Heart left ventricle (tissue), 16 donors: ENCODE measurements at regions of chr2 and their contacts with region 1.

Region 1: GRCh38 chr2:99066075-99066958 is 75.2 kb upstream of the C2orf15 start:
- DNase-seq: no peak
- ATAC-seq: peak in 3 of 4 donors; percentile 50 to 75 (median 66)
- H3K4me3 ChIP-seq: no peak overlapping the region
- H3K27ac ChIP-seq: peak overlapping the region in 1 of 12 donors; percentile 76
- H3K4me1 ChIP-seq: peaks cover 0 to 15% (median 0%) of the 10 kb centered on the region in 12 donors
- H3K27me3 ChIP-seq: no peaks in the 10 kb centered on the region
- CTCF ChIP-seq: peak in 11 of 12 donors; percentile 20 to 53 (median 36)
- POLR2A ChIP-seq: no peak

Region 2: GRCh38 chr2:98649135-98649991 is 417.0 kb before region 1 on chr2:
- intact Hi-C with region 1: loop called in 9 of 10 experiments (anchors 2 to 10 kb)
- DNase-seq: peak in 4 of 5 donors; percentile 71 to 74 (median 72)
- ATAC-seq: peak; percentile 61 to 94 (median 92)
- H3K4me3 ChIP-seq: no peak overlapping the region
- H3K27ac ChIP-seq: peak overlapping the region in 1 of 12 donors; percentile 29
- H3K4me1 ChIP-seq: peaks cover 0 to 27% (median 0%) of the 10 kb centered on the region in 12 donors
- H3K27me3 ChIP-seq: no peaks in the 10 kb centered on the region
- CTCF ChIP-seq: peak; percentile 97 to 100 (median 98)
- POLR2A ChIP-seq: no peak

Region 3: GRCh38 chr2:98654699-98655495 is 411.4 kb before region 1 on chr2:
- intact Hi-C with region 1: loop called in 2 of 10 experiments (anchors 5 to 10 kb)
- DNase-seq: no peak
- ATAC-seq: no peak
- H3K4me3 ChIP-seq: no peak overlapping the region
- H3K27ac ChIP-seq: peak overlapping the region in 2 of 12 donors; percentile 3 to 54
- H3K4me1 ChIP-seq: peaks cover 0 to 44% (median 0%) of the 10 kb centered on the region in 12 donors
- H3K27me3 ChIP-seq: no peaks in the 10 kb centered on the region
- CTCF ChIP-seq: no peak
- POLR2A ChIP-seq: no peak

Region 4: DNA sequence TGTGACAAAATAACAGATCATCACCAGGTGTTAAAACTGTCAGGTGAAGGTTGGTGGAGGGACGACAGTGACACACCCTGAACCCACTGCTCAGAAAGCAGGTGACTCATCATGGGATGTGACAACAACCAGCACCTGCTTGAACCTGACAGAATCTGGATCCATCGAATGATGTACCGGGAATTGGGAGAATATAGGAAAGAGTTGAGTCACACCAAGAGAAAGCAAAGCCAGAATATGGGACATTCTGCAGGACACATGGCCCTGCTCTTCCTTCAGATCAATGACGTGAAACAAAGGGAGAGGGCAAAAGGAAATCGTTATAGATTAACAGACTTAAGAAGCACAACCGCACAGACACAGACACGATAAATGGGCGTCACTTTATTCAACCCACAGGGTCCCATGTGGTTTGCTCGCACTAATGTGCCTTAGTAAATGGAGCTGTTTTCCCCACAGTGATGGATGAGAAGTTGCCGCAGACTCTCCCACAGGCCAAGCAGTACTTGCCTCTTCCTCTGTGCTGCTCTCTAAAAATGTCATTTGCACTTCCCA is 230.4 kb before region 1 on chr2:
- intact Hi-C with region 1: loop called in 2 of 10 experiments (anchors 5 to 10 kb)
- DNase-seq: no peak
- ATAC-seq: no peak
- H3K4me3 ChIP-seq: no peak overlapping the region
- H3K27ac ChIP-seq: peak overlapping the region in 1 of 12 donors; percentile 34
- H3K4me1 ChIP-seq: peaks cover 0 to 24% (median 11%) of the 10 kb centered on the region in 12 donors
- H3K27me3 ChIP-seq: no peaks in the 10 kb centered on the region
- CTCF ChIP-seq: no peak
- POLR2A ChIP-seq: no peak

Region 5: GRCh38 chr2:98846041-98846440 is 220.3 kb before region 1 on chr2:
- intact Hi-C with region 1: no loop called
- DNase-seq: no peak
- ATAC-seq: no peak
- H3K4me3 ChIP-seq: no peak overlapping the region
- H3K27ac ChIP-seq: no peak overlapping the region
- H3K4me1 ChIP-seq: no peaks in the 10 kb centered on the region
- H3K27me3 ChIP-seq: peaks cover 0 to 11% (median 0%) of the 10 kb centered on the region in 9 donors
- CTCF ChIP-seq: no peak
- POLR2A ChIP-seq: no peak

Region 6: DNA sequence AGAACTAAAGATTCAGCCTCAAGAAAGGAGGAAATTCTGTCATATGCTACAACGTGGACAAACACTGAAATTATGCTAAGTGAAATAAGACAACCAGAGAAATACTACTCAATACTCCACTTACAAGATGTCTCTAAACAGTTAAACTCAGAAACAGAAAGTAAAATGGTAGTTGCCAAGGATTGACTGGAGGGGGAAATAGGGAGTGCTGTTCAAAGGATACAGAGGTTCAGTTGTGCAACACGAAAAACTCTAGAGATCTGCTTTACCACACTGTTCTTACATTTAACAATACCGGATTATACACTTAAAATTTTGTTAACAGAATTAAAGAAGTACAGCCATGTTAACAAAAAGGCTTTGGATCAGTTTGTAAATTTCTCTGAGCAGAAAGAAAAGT is 35.4 kb after region 1 on chr2:
- intact Hi-C with region 1: no loop called
- DNase-seq: no peak
- ATAC-seq: no peak
- H3K4me3 ChIP-seq: peak overlapping the region in 1 of 12 donors; percentile 13
- H3K27ac ChIP-seq: no peak overlapping the region
- H3K4me1 ChIP-seq: no peaks in the 10 kb centered on the region
- H3K27me3 ChIP-seq: no peaks in the 10 kb centered on the region
- CTCF ChIP-seq: no peak
- POLR2A ChIP-seq: no peak

Region 7: GRCh38 chr2:99141110-99142108 is 75.1 kb after region 1 on chr2 and contains the start of gene C2orf15:
- intact Hi-C with region 1: no loop called
- DNase-seq: peak; percentile 90 to 96 (median 93)
- ATAC-seq: peak; percentile 96 to 99 (median 98)
- H3K4me3 ChIP-seq: peak within 1 kb of the TSS; percentile 62 to 99 (median 91)
- H3K27ac ChIP-seq: peak within 1 kb of the TSS in 11 of 12 donors; percentile 43 to 88 (median 75)
- H3K4me1 ChIP-seq: peaks cover 0 to 15% (median 4%) of the 10 kb centered on the region in 12 donors
- H3K27me3 ChIP-seq: no peaks in the 10 kb centered on the region
- CTCF ChIP-seq: no peak
- POLR2A ChIP-seq: peak in 1 of 2 donors; percentile 97
- total RNA-seq, gene C2orf15: 0.29 to 0.70 (median 0.69) TPM in 3 of 9 donors, not detected in the others